Naive thymus-derived CD4-positive, alpha-beta T cell (primary cell): ENCODE measurements at regions of chrX and their contacts with region 1.

Region 1: DNA sequence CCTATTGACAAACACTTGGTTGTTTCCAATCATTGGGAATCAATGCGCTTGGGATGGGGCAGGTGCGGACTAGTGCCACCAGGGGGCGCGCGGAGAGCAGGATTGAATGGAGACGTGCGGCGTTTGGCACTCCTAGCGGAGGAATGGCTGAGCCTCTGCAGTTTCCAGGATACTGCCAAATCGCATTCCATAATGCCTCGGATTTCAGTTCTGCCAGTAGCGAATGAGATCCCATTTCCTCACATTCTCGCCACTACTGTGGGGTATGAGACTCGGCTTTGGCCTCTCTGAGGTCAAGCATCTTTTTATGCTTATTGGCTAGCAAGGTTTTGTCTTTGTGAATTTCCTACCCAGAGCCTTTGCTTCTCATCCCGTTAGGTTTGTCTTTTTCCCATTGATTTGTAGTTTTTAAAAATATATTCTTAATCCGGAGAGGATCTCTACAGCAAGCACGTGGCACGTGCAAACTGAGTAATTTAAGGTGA is 28.7 kb downstream of the CLDN34 start:
- DNase-seq: peak; percentile 55 to 79 (median 67)
- ATAC-seq: peak; percentile 91
- H3K4me3 ChIP-seq: no peak overlapping the region
- H3K4me3 Mint-ChIP-seq: no peak overlapping the region
- H3K27ac ChIP-seq: no peak overlapping the region
- H3K27ac Mint-ChIP-seq: no peak overlapping the region
- H3K4me1 ChIP-seq: no peaks in the 10 kb centered on the region
- H3K4me1 Mint-ChIP-seq: peaks cover 0 to 17% (median 0%) of the 10 kb centered on the region in 7 donors
- H3K27me3 ChIP-seq: no peaks in the 10 kb centered on the region
- H3K27me3 Mint-ChIP-seq: no peaks in the 10 kb centered on the region

Region 2: DNA sequence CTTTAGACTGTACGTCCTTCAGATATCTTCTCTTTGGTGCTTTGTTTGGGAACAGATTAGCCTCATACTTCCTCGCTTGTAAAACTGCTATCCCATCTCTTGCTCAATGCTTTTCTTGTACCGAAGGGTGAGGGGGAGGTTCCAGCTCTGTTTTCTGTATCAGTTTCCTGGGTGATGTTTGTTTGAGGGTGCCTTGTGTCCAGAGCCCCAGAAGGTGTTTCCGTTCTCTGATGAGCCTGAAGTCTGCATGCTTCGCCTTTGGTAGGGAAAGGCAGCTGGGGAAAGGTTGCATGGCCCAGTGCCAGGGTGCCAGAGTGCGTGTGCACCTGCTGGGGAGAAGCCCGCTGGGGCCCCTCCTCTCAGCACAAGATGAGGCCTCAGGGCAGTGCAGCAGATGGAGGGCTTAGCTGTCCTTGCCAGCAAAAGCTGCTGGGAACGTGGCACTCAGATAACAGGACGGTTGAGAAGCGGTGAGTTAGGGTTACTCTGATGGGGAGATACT is 457.3 kb before region 1 on chrX:
- CTCF ChIA-PET with region 1: no interaction called
- POLR2A ChIA-PET with region 1: no interaction called
- intact Hi-C with region 1: no loop called
- DNase-seq: peak in 2 of 9 donors; percentile 12 to 14
- ATAC-seq: no peak
- H3K4me3 ChIP-seq: no peak overlapping the region
- H3K4me3 Mint-ChIP-seq: peak overlapping the region in 5 of 10 donors; percentile 1 to 40 (median 31)
- H3K27ac ChIP-seq: no peak overlapping the region
- H3K27ac Mint-ChIP-seq: peak overlapping the region in 4 of 9 donors; percentile 23 to 44 (median 32)
- H3K4me1 ChIP-seq: no peaks in the 10 kb centered on the region
- H3K4me1 Mint-ChIP-seq: peaks cover 11 to 66% (median 42%) of the 10 kb centered on the region in 7 donors
- H3K27me3 ChIP-seq: no peaks in the 10 kb centered on the region
- H3K27me3 Mint-ChIP-seq: no peaks in the 10 kb centered on the region

Region 3: GRCh38 chrX:9873952-9874351 is 121.9 kb before region 1 on chrX:
- CTCF ChIA-PET with region 1: no interaction called
- POLR2A ChIA-PET with region 1: no interaction called
- intact Hi-C with region 1: loop called in 1 of 2 experiments (anchors 1 kb)
- DNase-seq: peak in 8 of 9 donors; percentile 17 to 58 (median 30)
- ATAC-seq: peak; percentile 69
- H3K4me3 ChIP-seq: no peak overlapping the region
- H3K4me3 Mint-ChIP-seq: peak overlapping the region in 7 of 10 donors; percentile 2 to 70 (median 31)
- H3K27ac ChIP-seq: no peak overlapping the region
- H3K27ac Mint-ChIP-seq: peak overlapping the region in 4 of 9 donors; percentile 13 to 74 (median 51)
- H3K4me1 ChIP-seq: peaks cover 0 to 4% of the 10 kb centered on the region in 2 donors
- H3K4me1 Mint-ChIP-seq: peaks cover 2 to 33% (median 26%) of the 10 kb centered on the region in 7 donors
- H3K27me3 ChIP-seq: no peaks in the 10 kb centered on the region
- H3K27me3 Mint-ChIP-seq: peaks cover 0 to 21% (median 0%) of the 10 kb centered on the region in 5 donors

Region 4: GRCh38 chrX:10014462-10015356 is 18.8 kb after region 1 on chrX:
- CTCF ChIA-PET with region 1: no interaction called
- POLR2A ChIA-PET with region 1: no interaction called
- intact Hi-C with region 1: loop called in 1 of 2 experiments (anchors 2 kb)
- DNase-seq: peak; percentile 62 to 84 (median 78)
- ATAC-seq: peak; percentile 97
- H3K4me3 ChIP-seq: peak overlapping the region; percentile 37
- H3K4me3 Mint-ChIP-seq: peak overlapping the region; percentile 50 to 89 (median 64)
- H3K27ac ChIP-seq: peak overlapping the region; percentile 64
- H3K27ac Mint-ChIP-seq: peak overlapping the region in 4 of 9 donors; percentile 45 to 75 (median 58)
- H3K4me1 ChIP-seq: peaks cover 7 to 13% of the 10 kb centered on the region in 2 donors
- H3K4me1 Mint-ChIP-seq: peaks cover 17 to 51% (median 43%) of the 10 kb centered on the region in 7 donors
- H3K27me3 ChIP-seq: no peaks in the 10 kb centered on the region
- H3K27me3 Mint-ChIP-seq: peaks cover 0 to 4% (median 0%) of the 10 kb centered on the region in 5 donors

Region 5: DNA sequence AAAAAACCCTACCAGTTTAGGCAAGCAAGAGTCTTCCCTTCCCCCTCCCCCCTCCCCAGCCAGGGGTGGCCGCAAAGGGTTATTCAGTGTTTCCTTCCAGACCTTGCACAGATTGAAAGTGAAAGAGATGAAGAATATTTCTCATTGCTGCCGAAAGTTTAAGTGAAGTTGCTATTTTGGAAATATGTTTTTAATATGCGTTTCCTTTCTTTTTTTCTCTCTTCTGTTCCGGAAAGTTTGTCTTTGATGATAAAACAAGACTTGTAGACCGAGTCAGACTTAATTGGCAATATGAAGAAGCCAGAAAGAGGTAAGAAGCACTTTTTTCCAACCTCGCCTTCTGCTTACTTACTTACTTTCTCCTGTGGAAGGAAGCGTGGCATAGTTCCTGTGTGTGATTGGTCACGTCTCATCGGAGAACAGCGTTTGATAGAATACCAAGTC is 102.4 kb after region 1 on chrX:
- CTCF ChIA-PET with region 1: interaction called, 3 read pairs
- POLR2A ChIA-PET with region 1: no interaction called
- intact Hi-C with region 1: loop called in 1 of 2 experiments (anchors 1 kb)
- DNase-seq: peak in 8 of 9 donors; percentile 30 to 78 (median 64)
- ATAC-seq: peak; percentile 87
- H3K4me3 ChIP-seq: peak overlapping the region; percentile 72
- H3K4me3 Mint-ChIP-seq: peak overlapping the region; percentile 83 to 94 (median 88)
- H3K27ac ChIP-seq: peak overlapping the region; percentile 73
- H3K27ac Mint-ChIP-seq: peak overlapping the region; percentile 86 to 98 (median 92)
- H3K4me1 ChIP-seq: peaks cover 5 to 9% of the 10 kb centered on the region in 2 donors
- H3K4me1 Mint-ChIP-seq: peaks cover 13 to 58% (median 51%) of the 10 kb centered on the region in 7 donors
- H3K27me3 ChIP-seq: no peaks in the 10 kb centered on the region
- H3K27me3 Mint-ChIP-seq: no peaks in the 10 kb centered on the region